ENCODE measurements at regions of chrX and their contacts with region 1.

Region 1: GRCh38 chrX:19372170-19372546 is 28.4 kb downstream of the PDHA1 start:
- H3K4me3 Mint-ChIP-seq: peak overlapping the region; percentile 75
- H3K27ac Mint-ChIP-seq: peak overlapping the region; percentile 75
- H3K4me1 Mint-ChIP-seq: peaks cover 16% of the 10 kb centered on the region
- H3K27me3 Mint-ChIP-seq: peaks cover 11% of the 10 kb centered on the region

Region 2: DNA sequence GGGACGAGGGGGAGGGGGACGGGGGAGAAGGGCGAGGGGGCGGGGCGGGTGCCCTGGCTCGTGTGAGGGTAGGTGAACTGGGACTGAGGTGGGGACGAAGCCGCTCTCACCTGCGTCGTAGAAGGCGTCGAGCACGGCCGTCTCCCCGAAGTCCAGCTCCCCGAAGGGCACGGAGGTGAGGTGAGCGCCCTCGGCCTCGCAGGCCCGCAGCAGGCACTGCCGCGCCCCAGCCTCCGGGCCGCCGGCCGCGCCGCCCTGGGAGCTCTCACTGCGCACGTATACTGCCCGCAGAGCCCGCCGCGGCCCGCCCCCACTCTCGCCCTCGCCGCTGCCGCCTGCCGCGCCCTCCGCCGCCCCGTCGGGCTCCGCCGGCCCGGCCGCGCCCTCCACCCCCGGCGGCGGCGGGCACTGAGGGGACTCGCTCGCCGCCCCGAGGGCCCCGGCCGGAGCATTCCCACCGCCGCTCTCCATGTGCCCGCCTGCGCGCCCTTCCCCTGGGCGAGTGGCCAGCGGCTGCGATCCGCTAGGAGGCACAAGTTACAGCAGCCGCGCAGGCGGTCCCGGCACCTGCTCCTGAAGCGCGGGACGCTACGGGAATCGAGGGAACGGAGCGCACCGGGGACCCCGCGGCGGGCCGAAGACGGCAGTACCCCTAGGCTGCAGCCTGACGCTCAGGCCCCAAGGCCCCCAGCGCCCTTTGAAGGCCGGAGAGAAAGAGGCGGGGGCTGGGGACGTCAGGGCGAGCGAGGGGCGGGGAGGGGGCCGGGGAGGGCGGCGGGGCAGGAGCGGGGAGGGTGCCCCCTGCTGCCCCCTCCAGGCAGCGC is 142.8 kb after region 1 on chrX and contains the start of gene MAP3K15:
- intact Hi-C with region 1: loop called (anchors 5 kb)
- H3K4me3 Mint-ChIP-seq: peak within 1 kb of the TSS; percentile 72
- H3K27ac Mint-ChIP-seq: no peak within 1 kb of the TSS
- H3K4me1 Mint-ChIP-seq: no peaks in the 10 kb centered on the region
- H3K27me3 Mint-ChIP-seq: peaks cover 39% of the 10 kb centered on the region

Measured in dendritic cell treated with granulocyte-macrophage colony-stimulating factor and Interleukin-4, amounts not matched to agents 40 ng/mL and 50 ng/mL, for 4 days (primary cell).